T-cell (primary cell): ENCODE measurements at regions of chr1 and their contacts with region 1.

Region 1: GRCh38 chr1:181088079-181089016 is at the start of gene IER5:
- DNase-seq: peak; percentile 83 to 97 (median 89)
- ATAC-seq: peak; percentile 73 to 87 (median 82)
- H3K4me3 ChIP-seq: peak within 1 kb of the TSS; percentile 66 to 91
- H3K4me3 Mint-ChIP-seq: peak within 1 kb of the TSS; percentile 89 to 99 (median 96)
- H3K27ac ChIP-seq: peak within 1 kb of the TSS; percentile 96
- H3K27ac Mint-ChIP-seq: peak within 1 kb of the TSS; percentile 97 to 98
- H3K4me1 ChIP-seq: peaks cover 8 to 19% of the 10 kb centered on the region in 2 experiments
- H3K4me1 Mint-ChIP-seq: peaks cover 48 to 56% (median 51%) of the 10 kb centered on the region in 3 donors
- H3K27me3 ChIP-seq: no peaks in the 10 kb centered on the region
- H3K27me3 Mint-ChIP-seq: no peaks in the 10 kb centered on the region
- total RNA-seq, gene IER5: 26.6 to 85.5 (median 32.2) TPM

Region 2: GRCh38 chr1:180502360-180503273 is 585.7 kb before region 1 on chr1 and contains the start of gene ACBD6:
- CTCF ChIA-PET with region 1: no interaction called
- POLR2A ChIA-PET with region 1: interaction called in 1 of 2 experiments, 10 read pairs
- DNase-seq: peak; percentile 77 to 90 (median 83)
- ATAC-seq: peak; percentile 89 to 92 (median 90)
- H3K4me3 ChIP-seq: peak within 1 kb of the TSS; percentile 97 to 99
- H3K4me3 Mint-ChIP-seq: peak within 1 kb of the TSS; percentile 92 to 96 (median 95)
- H3K27ac ChIP-seq: peak within 1 kb of the TSS; percentile 87
- H3K27ac Mint-ChIP-seq: peak within 1 kb of the TSS; percentile 96 to 99
- H3K4me1 ChIP-seq: peaks cover 21 to 22% of the 10 kb centered on the region in 2 experiments
- H3K4me1 Mint-ChIP-seq: peaks cover 29 to 40% (median 39%) of the 10 kb centered on the region in 3 donors
- H3K27me3 ChIP-seq: no peaks in the 10 kb centered on the region
- H3K27me3 Mint-ChIP-seq: no peaks in the 10 kb centered on the region
- total RNA-seq, gene ACBD6: 44.3 to 58.5 (median 53.0) TPM

Region 3: GRCh38 chr1:181099152-181100014 is 11.0 kb after region 1 on chr1:
- CTCF ChIA-PET with region 1: interaction called, 8 to 33 read pairs
- POLR2A ChIA-PET with region 1: interaction called, 12 to 147 read pairs
- DNase-seq: no peak
- ATAC-seq: peak; percentile 15 to 53 (median 40)
- H3K4me3 ChIP-seq: no peak overlapping the region
- H3K4me3 Mint-ChIP-seq: no peak overlapping the region
- H3K27ac ChIP-seq: no peak overlapping the region
- H3K27ac Mint-ChIP-seq: peak overlapping the region; percentile 70 to 84
- H3K4me1 ChIP-seq: peaks cover 24 to 30% of the 10 kb centered on the region in 2 experiments
- H3K4me1 Mint-ChIP-seq: peaks cover 54 to 74% (median 63%) of the 10 kb centered on the region in 3 donors
- H3K27me3 ChIP-seq: no peaks in the 10 kb centered on the region
- H3K27me3 Mint-ChIP-seq: no peaks in the 10 kb centered on the region

Region 4: DNA sequence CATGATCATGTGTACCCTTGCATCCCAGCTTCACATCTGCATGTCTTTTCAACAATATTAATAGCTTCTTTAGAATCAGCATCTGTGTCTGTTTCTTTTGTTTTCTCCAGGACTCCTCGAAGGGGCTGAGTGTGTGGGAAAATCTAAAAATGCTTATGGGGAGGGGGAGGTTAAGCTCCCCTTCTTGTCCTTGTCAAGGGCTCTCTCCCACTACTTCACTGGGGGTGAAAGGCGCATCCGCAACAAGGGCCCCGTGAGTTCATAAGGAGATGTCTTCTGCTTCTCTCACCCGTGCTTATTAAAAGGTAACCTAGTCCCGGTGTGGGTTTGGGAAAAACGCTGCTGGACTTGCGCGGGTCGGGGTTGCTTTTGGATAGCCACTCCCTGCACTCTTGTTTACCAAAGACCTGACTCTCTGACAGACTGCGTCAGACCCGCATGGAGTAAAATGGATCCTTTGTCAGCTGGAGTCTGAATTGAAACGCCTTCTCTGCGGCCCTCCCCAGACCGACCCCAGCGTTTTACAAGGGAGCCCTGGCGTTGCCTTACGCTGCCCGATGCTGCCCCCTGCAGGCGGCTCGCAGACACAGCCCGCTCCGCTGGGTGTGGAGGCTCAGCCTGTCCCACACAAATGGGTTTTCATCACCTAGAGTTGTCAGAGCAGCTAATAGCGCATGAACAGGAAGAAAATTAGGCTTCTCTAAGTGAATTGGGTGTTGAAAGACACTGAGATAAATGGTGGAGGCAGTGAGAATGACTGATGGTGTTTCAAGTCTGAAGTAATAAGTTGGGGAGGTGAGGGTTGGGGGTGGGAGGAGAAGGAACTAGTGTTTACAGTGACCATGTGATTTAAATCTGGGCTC is 54.0 kb after region 1 on chr1:
- CTCF ChIA-PET with region 1: interaction called, 24 to 28 read pairs
- POLR2A ChIA-PET with region 1: interaction called in 1 of 2 experiments, 5 read pairs
- DNase-seq: peak; percentile 61 to 93 (median 82)
- ATAC-seq: peak; percentile 97 to 100 (median 98)
- H3K4me3 ChIP-seq: no peak overlapping the region
- H3K4me3 Mint-ChIP-seq: peak overlapping the region in 1 of 3 donors; percentile 4
- H3K27ac ChIP-seq: no peak overlapping the region
- H3K27ac Mint-ChIP-seq: peak overlapping the region; percentile 5 to 70
- H3K4me1 ChIP-seq: peaks cover 3 to 28% of the 10 kb centered on the region in 2 experiments
- H3K4me1 Mint-ChIP-seq: peaks cover 30 to 59% (median 51%) of the 10 kb centered on the region in 3 donors
- H3K27me3 ChIP-seq: no peaks in the 10 kb centered on the region
- H3K27me3 Mint-ChIP-seq: no peaks in the 10 kb centered on the region

Region 5: GRCh38 chr1:181181766-181182165 is 93.4 kb after region 1 on chr1:
- CTCF ChIA-PET with region 1: no interaction called
- POLR2A ChIA-PET with region 1: interaction called in 1 of 2 experiments, 10 read pairs
- DNase-seq: no peak
- ATAC-seq: no peak
- H3K4me3 ChIP-seq: no peak overlapping the region
- H3K4me3 Mint-ChIP-seq: no peak overlapping the region
- H3K27ac ChIP-seq: no peak overlapping the region
- H3K27ac Mint-ChIP-seq: no peak overlapping the region
- H3K4me1 ChIP-seq: peaks cover 13% of the 10 kb centered on the region in 2 experiments
- H3K4me1 Mint-ChIP-seq: peaks cover 13 to 16% (median 15%) of the 10 kb centered on the region in 3 donors
- H3K27me3 ChIP-seq: peaks cover 2 to 19% of the 10 kb centered on the region in 2 experiments
- H3K27me3 Mint-ChIP-seq: peaks cover 10 to 15% of the 10 kb centered on the region in 2 donors